PC-9 (cell line): ENCODE measurements at regions of chr15 and their contacts with region 1.

Region 1: DNA sequence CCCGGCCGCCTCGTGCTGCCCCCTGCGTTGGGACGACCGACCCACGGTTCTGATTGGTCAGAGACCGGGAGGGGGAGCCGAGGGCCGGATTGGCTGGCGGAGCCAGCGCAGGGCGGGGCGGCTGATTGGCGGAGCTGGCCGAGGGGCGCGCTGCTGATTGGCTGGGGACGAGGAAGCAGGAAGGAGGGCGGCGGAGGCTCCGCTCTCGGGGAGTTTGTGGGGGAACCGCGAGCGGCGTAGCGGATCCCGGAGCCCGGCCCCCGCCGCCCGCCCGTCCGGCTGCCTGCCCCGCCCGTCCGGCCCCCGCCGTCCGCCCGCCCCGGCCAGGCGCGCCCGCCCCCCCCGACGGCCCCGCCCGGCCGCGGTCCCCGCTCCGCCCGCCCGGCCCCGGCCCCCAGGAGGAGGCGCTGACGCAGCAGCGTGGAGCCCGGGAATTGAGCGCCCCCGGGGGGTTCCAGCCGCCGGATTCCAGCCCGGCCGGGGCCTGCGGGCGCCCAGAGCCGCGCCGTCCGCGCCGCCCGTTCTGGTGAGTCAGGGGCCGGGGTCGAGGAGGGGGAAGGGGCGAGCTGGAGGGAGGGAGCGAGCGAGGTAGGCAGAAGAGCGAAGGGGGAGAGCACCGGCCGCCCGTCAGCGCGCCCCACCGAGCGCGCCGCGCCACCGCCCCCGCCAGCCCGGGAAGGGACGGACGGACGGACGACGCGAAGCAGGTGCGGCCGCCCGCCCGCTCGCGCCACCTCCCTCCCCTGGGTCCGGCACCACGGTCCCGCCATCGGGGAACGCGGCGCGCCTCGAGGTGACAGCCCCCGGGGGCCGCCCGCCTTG is at the start of gene BAHD1:
- DNase-seq: peak; percentile 77 to 96
- H3K4me3 ChIP-seq: peak within 1 kb of the TSS; percentile 66
- H3K27ac ChIP-seq: peak within 1 kb of the TSS; percentile 45
- H3K4me1 ChIP-seq: peaks cover 9% of the 10 kb centered on the region; the same call in 1 of the 2 replicates
- H3K27me3 ChIP-seq: no peaks in the 10 kb centered on the region
- CTCF ChIP-seq: no peak
- total RNA-seq, gene BAHD1: 17.3 and 19.1 TPM in 2 replicates

Region 2: DNA sequence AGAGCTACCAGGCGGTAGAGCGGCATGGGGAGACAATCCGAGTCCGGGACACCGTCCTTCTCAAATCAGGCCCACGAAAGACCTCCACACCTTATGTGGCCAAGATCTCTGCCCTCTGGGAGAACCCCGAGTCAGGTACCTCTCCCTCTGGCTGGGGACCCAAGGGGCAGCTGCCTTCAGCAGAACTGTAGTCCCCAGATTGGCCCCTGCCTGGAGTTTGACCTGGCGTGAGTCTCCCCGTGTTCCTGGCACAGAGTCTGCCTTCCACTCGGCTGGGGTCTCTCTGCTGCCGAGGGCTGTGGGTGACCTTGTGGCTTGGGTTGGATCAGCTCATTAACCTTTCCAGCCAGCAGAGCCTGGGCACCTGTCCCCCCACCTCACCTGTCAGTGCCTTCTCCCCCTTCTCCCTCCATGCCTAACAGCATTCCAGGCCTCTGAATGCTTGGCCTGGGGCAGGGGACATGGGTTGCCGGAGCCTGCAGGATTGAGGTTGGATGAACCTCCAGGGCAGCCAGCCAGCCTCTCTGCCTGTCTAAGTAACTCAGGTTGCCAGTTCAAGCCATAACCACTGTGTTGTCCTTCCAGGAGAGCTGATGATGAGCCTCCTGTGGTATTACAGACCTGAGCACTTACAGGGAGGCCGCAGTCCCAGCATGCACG is 23.1 kb after region 1 on chr15:
- CTCF ChIA-PET with region 1: no interaction called
- POLR2A ChIA-PET with region 1: interaction called, 12 read pairs
- intact Hi-C with region 1: no loop called
- DNase-seq: peak in 1 of 2 experiments; percentile 42
- H3K4me3 ChIP-seq: no peak overlapping the region
- H3K27ac ChIP-seq: no peak overlapping the region
- H3K4me1 ChIP-seq: no peaks in the 10 kb centered on the region
- H3K27me3 ChIP-seq: no peaks in the 10 kb centered on the region
- CTCF ChIP-seq: no peak

Region 3: GRCh38 chr15:40470423-40471104 is 29.6 kb after region 1 on chr15 and contains the start of gene CHST14:
- CTCF ChIA-PET with region 1: no interaction called
- POLR2A ChIA-PET with region 1: interaction called, 3 read pairs
- intact Hi-C with region 1: loop called (anchors 2 kb)
- DNase-seq: peak; percentile 58 to 61
- H3K4me3 ChIP-seq: peak within 1 kb of the TSS; percentile 66
- H3K27ac ChIP-seq: peak within 1 kb of the TSS; percentile 31
- H3K4me1 ChIP-seq: peaks cover 17% of the 10 kb centered on the region
- H3K27me3 ChIP-seq: no peaks in the 10 kb centered on the region
- CTCF ChIP-seq: no peak
- total RNA-seq, gene CHST14: 30.6 and 34.3 TPM in 2 replicates

Region 4: DNA sequence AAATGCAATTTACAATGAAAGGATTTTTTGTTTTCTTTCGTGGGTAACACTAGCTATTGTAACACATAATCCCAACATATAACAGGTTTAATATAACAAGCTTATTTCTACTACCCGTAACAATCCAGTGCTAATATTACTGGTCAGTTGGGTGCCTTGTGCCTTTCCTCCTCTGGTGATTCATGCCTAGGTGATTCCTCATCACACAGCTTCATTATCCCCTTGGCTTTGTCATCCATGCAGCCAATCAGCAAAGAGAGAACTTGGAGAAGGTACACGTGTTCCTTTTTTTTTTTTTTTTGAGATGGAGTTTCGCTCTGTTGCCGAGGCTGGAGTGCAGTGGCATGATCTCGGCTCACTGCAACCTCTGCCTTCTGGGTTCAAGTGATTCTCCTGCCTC is 60.5 kb after region 1 on chr15:
- CTCF ChIA-PET with region 1: interaction called, 12 read pairs
- POLR2A ChIA-PET with region 1: no interaction called
- intact Hi-C with region 1: loop called (anchors 5 kb)
- DNase-seq: no peak
- H3K4me3 ChIP-seq: no peak overlapping the region
- H3K27ac ChIP-seq: no peak overlapping the region
- H3K4me1 ChIP-seq: peaks cover 15% of the 10 kb centered on the region
- H3K27me3 ChIP-seq: no peaks in the 10 kb centered on the region
- CTCF ChIP-seq: no peak

Region 5: DNA sequence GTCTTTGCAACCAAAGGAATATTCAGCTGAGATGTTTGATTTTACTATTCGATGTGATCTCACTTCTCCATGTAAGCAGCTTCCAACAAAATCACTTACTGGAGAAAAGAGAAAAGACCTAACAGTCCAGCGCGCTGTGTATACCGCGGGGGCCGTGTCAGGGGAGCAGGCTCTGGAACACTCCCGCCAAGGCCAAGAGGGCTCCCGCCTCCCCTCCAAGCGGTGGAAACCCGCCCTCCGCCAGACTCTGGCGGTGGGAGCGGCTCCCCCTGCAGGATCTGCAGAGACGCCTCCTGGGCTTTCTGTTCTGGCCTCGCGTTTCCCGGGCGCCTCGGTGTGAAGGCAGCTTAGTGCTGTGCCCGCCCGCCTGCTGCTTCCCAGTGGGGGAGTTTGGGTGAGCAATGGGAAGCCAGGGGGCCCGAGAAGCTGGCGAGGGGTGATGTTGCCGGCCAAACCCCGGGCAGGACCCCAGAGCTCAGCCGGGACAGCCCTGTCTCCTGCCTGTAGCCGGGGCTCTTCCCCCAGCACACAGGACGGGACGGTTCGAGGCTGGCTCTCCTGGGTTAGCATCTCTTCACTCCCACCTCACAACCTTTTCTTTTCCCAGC is 66.1 kb after region 1 on chr15:
- CTCF ChIA-PET with region 1: interaction called, 12 read pairs
- POLR2A ChIA-PET with region 1: no interaction called
- intact Hi-C with region 1: loop called (anchors 5 kb)
- DNase-seq: peak; percentile 47 to 69
- H3K4me3 ChIP-seq: no peak overlapping the region; the same call in 1 of the 2 replicates
- H3K27ac ChIP-seq: no peak overlapping the region
- H3K4me1 ChIP-seq: peaks cover 7% of the 10 kb centered on the region
- H3K27me3 ChIP-seq: no peaks in the 10 kb centered on the region
- CTCF ChIP-seq: peak; percentile 51

Region 6: DNA sequence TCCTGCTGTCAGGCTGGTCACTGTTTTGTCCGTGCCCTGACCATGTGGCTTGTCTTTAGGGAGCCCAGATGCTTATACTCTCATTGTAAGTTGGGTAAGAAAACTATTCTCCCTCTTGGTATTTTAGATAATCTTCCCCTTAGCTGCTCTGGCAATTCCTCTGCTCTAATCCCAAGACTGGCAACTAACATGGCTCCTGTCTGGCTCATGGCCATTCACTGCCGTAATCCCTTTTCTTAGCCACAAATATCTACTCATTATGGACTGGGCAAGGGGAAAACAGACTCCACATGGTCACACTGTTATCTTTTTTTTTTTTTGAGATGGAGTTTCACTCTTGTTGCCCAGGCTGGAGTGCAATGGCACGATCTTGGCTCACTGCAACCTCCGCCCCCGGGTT is 1156.8 kb after region 1 on chr15:
- CTCF ChIA-PET with region 1: interaction called, 14 read pairs
- POLR2A ChIA-PET with region 1: no interaction called
- intact Hi-C with region 1: no loop called
- DNase-seq: no peak
- H3K4me3 ChIP-seq: no peak overlapping the region
- H3K27ac ChIP-seq: no peak overlapping the region
- H3K4me1 ChIP-seq: peaks cover 6% of the 10 kb centered on the region; the same call in 1 of the 2 replicates
- H3K27me3 ChIP-seq: no peaks in the 10 kb centered on the region
- CTCF ChIP-seq: no peak